ENCODE measurements at regions of chr5 and their contacts with region 1.

Region 1: GRCh38 chr5:68252673-68253623 is 37.4 kb downstream of the PIK3R1 start:
- DNase-seq: peak; percentile 63
- ATAC-seq: peak; percentile 92
- H3K4me3 ChIP-seq: no peak overlapping the region
- H3K27ac ChIP-seq: no peak overlapping the region
- H3K4me1 ChIP-seq: peaks cover 18% of the 10 kb centered on the region
- H3K27me3 ChIP-seq: no peaks in the 10 kb centered on the region
- CTCF ChIP-seq: peak; percentile 87
- EP300 ChIP-seq: no peak
- POLR2A ChIP-seq: no peak
- RAD21 ChIP-seq: peak; percentile 90

Region 2: DNA sequence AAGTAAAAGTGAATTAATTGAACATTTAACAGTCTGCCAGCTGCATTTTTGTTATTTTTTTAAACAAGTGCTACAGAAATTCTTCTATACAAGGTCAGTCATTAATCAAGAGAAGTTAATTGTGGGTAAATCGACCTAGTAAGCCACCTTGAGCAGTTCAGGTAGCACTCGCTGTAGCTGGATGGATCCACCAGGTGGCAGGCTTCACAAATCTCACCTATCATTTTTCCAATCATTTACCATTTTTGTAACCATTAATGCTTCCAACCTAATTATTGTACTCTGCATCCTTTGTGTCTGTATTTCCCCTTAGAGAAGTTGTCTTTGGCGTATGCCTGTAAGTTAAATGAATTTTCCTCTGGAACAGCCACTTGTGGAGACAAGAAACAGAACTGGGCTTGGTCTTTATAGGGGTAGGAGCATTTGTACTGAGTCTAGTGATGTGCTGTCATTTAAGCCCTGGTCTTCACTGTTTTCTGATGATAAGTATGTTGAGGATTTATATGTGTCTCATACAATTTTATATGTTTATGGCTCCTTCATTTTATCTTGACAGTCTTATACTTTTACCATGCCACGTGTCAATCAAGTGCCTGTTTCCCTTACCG is 1095.9 kb before region 1 on chr5:
- CTCF ChIA-PET with region 1: no interaction called
- POLR2A ChIA-PET with region 1: no interaction called
- in situ Hi-C with region 1: no loop called
- intact Hi-C with region 1: loop called (anchors 1 kb)
- DNase-seq: peak; percentile 22
- ATAC-seq: peak; percentile 71
- H3K4me3 ChIP-seq: no peak overlapping the region
- H3K27ac ChIP-seq: no peak overlapping the region
- H3K4me1 ChIP-seq: peaks cover 8% of the 10 kb centered on the region
- H3K27me3 ChIP-seq: no peaks in the 10 kb centered on the region
- CTCF ChIP-seq: peak; percentile 61
- EP300 ChIP-seq: no peak
- POLR2A ChIP-seq: no peak
- RAD21 ChIP-seq: no peak

Region 3: DNA sequence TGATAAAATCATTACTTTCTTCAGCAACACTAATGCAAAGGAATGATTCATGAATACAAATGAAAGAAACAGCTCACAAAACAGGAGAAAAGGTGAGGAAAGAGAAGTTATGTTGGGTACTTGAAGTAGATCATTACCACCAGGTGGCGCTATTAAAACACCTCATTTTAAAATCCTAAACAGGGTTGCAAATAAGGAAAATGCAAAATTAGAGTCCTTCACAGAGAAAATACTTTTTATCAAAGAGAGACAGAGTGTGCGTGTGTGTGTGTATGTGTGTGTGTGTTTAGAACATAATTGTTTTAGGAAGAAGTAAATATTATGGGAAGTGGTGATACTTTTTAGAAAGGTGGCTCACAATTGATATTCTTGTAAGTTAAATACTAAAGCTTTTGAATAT is 1006.8 kb before region 1 on chr5:
- CTCF ChIA-PET with region 1: interaction called, 11 read pairs
- POLR2A ChIA-PET with region 1: no interaction called
- in situ Hi-C with region 1: loop called (anchors 5 kb)
- intact Hi-C with region 1: loop called (anchors 1 kb)
- DNase-seq: peak; percentile 49
- ATAC-seq: no peak; the same call in 2 of the 3 replicates
- H3K4me3 ChIP-seq: no peak overlapping the region
- H3K27ac ChIP-seq: no peak overlapping the region
- H3K4me1 ChIP-seq: peaks cover 13% of the 10 kb centered on the region
- H3K27me3 ChIP-seq: no peaks in the 10 kb centered on the region
- CTCF ChIP-seq: peak; percentile 71
- EP300 ChIP-seq: no peak
- POLR2A ChIP-seq: no peak
- RAD21 ChIP-seq: peak; percentile 65; the same call in 1 of the 2 replicates

Region 4: DNA sequence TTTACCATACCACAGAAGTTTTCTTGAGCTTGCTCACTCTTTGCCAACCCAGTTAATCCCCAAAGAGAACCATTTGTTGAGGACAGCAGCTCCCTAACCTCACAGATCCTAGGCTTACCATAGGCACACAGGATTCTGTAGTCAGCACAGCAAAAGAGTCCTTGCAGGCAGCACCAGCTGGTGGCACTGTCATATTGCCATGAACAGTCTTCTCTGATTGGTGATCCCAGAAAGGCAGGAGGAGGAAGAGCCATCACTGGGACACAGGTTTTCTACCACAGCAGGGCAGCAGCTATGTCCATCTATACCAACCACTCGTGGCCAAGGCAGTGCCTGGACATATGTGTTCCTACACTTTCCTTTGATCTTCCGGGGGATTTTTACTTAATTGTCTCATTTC is 759.3 kb before region 1 on chr5:
- CTCF ChIA-PET with region 1: interaction called, 3 read pairs
- POLR2A ChIA-PET with region 1: no interaction called
- in situ Hi-C with region 1: loop called (anchors 10 kb)
- intact Hi-C with region 1: loop called (anchors 1 kb)
- DNase-seq: peak; percentile 55
- ATAC-seq: peak; percentile 98
- H3K4me3 ChIP-seq: no peak overlapping the region
- H3K27ac ChIP-seq: no peak overlapping the region
- H3K4me1 ChIP-seq: no peaks in the 10 kb centered on the region
- H3K27me3 ChIP-seq: no peaks in the 10 kb centered on the region
- CTCF ChIP-seq: peak; percentile 87
- EP300 ChIP-seq: no peak
- POLR2A ChIP-seq: no peak
- RAD21 ChIP-seq: peak; percentile 74; the same call in 1 of the 2 replicates

Region 5: GRCh38 chr5:68331192-68332079 is 78.5 kb after region 1 on chr5:
- CTCF ChIA-PET with region 1: no interaction called
- POLR2A ChIA-PET with region 1: no interaction called
- in situ Hi-C with region 1: no loop called
- intact Hi-C with region 1: no loop called
- DNase-seq: peak; percentile 7
- ATAC-seq: no peak
- H3K4me3 ChIP-seq: no peak overlapping the region
- H3K27ac ChIP-seq: no peak overlapping the region
- H3K4me1 ChIP-seq: no peaks in the 10 kb centered on the region
- H3K27me3 ChIP-seq: peaks cover 1 to 3% of the 10 kb centered on the region in 2 experiments; a peak in 2 of 5 replicates
- CTCF ChIP-seq: no peak
- EP300 ChIP-seq: no peak
- POLR2A ChIP-seq: no peak
- RAD21 ChIP-seq: no peak

Region 6: GRCh38 chr5:68618501-68618900 is 365.6 kb after region 1 on chr5:
- CTCF ChIA-PET with region 1: no interaction called
- POLR2A ChIA-PET with region 1: no interaction called
- in situ Hi-C with region 1: no loop called
- intact Hi-C with region 1: no loop called
- DNase-seq: no peak
- ATAC-seq: no peak
- H3K4me3 ChIP-seq: no peak overlapping the region
- H3K27ac ChIP-seq: no peak overlapping the region
- H3K4me1 ChIP-seq: no peaks in the 10 kb centered on the region
- H3K27me3 ChIP-seq: no peaks in the 10 kb centered on the region
- CTCF ChIP-seq: no peak
- EP300 ChIP-seq: no peak
- POLR2A ChIP-seq: no peak
- RAD21 ChIP-seq: no peak